Activated naive CD4-positive, alpha-beta T cell treated with anti-CD3 and anti-CD28 coated beads for 36 hours (primary cell): ENCODE measurements at regions of chr1 and their contacts with region 1.

Region 1: DNA sequence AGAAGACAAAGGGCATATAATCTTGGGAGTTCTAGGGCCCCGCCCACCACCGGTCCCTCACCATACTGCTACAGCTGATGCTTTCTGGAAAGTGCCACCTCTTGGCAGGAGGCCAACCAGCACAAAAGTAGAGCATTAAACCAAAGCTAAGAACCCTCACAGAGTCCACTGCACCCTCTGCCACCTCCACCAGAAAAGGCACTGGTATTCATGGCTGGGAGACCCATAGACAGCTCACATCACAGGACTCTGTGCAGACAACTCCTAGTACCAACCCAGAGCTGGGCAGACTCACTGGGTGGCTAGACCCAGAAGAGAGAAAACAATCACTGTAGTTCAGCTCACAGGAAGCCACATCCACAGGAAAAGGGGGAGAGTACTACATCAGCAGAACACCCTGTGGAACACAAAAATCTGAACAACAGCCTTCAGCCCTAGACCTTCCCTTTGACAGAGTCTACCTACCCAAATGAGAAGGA is 10.8 kb downstream of the THEM4 start:
- DNase-seq: peak; percentile 67
- H3K4me3 Mint-ChIP-seq: peak overlapping the region; percentile 45
- H3K27ac Mint-ChIP-seq: peak overlapping the region; percentile 87
- H3K4me1 Mint-ChIP-seq: peaks cover 58% of the 10 kb centered on the region
- H3K27me3 Mint-ChIP-seq: no peaks in the 10 kb centered on the region

Region 2: DNA sequence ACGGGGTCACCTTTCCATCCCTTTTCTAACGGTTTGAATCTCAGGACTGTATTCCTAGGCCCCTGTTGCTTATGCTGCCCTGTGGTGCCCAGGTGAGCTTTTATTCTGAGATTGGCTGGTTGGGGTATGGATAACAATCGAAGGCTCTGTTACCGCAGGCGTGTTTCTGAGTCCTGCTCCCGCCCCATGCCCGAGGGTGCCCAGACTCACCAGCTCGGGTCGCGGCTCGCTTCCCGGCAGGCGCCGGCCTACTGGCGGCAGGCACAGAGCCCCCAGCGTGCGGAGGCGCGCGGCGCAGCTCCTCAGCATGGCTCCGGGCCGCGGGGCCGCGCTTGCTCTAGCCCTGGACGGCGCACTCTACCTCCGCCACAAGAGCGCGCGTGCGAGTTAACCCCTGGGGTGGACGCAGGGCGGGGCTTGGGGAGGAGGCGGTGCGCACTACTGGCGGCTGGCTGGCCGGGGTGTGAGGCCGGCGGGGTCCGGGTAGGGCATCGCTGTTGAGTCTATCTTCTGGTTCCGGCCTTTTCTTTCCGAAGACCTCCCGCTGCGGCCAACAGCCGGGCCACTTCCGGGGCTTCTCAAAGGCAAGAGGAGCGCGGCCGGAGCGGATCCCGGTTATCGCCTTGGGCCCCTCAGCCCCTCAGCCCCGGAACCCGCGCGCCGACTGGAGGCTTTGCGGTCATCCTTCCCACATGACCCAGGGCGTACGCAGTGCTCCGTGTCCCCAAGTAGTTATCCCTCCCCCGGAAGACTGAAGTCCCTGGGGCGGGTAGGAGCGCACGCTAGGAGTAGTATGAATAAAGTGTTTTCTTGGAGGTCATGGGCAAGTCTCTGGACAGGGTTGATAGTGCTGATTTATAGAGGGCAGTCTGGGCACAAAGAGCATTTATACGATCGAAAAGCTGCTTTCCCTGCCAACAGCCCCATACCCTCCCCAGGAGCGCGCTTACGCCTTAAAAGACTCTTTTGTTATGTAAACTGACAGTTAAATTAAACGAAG is 10.9 kb after region 1 on chr1 and contains the start of gene THEM4:
- CTCF ChIA-PET with region 1: interaction called, 6 read pairs
- intact Hi-C with region 1: loop called (anchors 1 kb)
- DNase-seq: peak; percentile 97
- H3K4me3 Mint-ChIP-seq: peak within 1 kb of the TSS; percentile 75
- H3K27ac Mint-ChIP-seq: peak within 1 kb of the TSS; percentile 81
- H3K4me1 Mint-ChIP-seq: peaks cover 36% of the 10 kb centered on the region
- H3K27me3 Mint-ChIP-seq: no peaks in the 10 kb centered on the region
- total RNA-seq, gene THEM4: 20.1 to 22.0 TPM

Region 3: DNA sequence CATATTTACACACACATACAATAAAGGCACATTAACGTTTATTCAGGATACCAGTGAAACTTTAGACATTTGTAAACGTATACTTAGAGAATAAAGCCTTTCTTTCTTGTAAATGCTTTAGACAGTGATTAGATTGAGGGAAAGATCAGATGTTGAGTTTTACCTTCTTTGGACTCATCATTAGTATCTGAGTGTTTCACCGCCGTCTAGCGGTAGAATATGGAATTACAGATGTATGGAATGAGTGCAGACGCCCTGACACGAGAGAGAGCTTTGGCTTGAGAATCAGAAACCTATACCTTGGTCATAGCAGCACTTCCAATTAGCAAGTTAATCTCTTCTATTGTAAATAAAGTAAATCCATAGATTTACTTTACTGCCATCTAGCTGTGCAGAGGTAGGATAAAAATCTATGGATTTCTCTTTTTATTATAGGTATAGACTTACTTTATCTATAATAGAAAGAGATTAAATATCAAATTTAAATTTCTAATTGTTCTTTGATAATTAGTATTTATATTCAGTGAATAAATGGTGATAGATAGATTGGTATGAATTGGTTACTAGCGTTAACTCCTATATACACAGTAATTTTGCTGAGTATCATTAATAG is 448.7 kb after region 1 on chr1:
- CTCF ChIA-PET with region 1: no interaction called
- intact Hi-C with region 1: no loop called
- DNase-seq: peak; percentile 72
- H3K4me3 Mint-ChIP-seq: no peak overlapping the region
- H3K27ac Mint-ChIP-seq: no peak overlapping the region
- H3K4me1 Mint-ChIP-seq: peaks cover 7% of the 10 kb centered on the region
- H3K27me3 Mint-ChIP-seq: peaks cover 21% of the 10 kb centered on the region